CD8-positive, alpha-beta memory T cell (primary cell): ENCODE measurements at regions of chr2 and their contacts with region 1.

Region 1: GRCh38 chr2:233443468-233444183 is 89.3 kb downstream of the DGKD start:
- DNase-seq: peak; percentile 67 to 88 (median 73)
- H3K4me3 ChIP-seq: no peak overlapping the region
- H3K4me3 Mint-ChIP-seq: no peak overlapping the region
- H3K27ac ChIP-seq: no peak overlapping the region
- H3K27ac Mint-ChIP-seq: peak overlapping the region in 7 of 8 donors; percentile 15 to 84 (median 66)
- H3K4me1 ChIP-seq: peaks cover 13% of the 10 kb centered on the region
- H3K4me1 Mint-ChIP-seq: peaks cover 11 to 29% (median 17%) of the 10 kb centered on the region in 3 donors
- H3K27me3 ChIP-seq: no peaks in the 10 kb centered on the region
- H3K27me3 Mint-ChIP-seq: no peaks in the 10 kb centered on the region

Region 2: DNA sequence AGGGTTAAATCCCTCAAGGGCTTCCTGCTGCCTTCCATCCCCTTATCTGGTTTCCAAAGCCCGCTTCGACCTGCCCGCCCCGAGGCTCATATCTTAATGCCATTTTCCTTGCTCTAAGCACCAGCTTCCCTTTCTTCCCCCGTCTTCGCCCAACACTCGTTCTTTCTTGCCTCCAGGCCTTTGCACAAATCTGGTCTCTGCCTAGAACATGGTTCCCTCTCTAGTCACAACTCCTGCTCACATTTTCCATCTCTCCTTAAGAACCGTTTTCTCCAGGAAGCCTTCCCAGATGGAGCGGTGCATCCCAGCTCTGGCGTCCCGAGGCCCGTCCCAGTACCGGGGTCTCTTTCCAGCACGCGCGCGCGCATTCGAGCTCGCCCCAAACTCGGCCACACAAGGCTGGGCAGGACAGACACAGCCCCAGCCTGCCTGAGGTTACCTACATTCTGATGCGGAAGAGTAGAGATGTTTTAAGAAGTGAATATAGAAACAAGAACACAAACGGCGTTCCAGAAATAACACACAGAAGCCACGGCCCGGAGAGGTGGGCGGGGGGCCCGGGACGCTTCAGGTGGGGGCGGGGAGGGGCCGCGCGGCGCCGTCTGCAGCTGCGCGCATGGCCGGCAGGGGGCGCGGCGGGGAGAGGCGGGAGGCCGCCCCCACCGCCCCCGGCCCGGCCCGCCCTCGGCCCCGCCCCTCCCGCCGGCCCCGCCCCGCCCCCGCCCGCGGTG is 89.7 kb before region 1 on chr2 and contains the start of gene DGKD:
- CTCF ChIA-PET with region 1: interaction called, 23 read pairs
- POLR2A ChIA-PET with region 1: no interaction called
- DNase-seq: peak; percentile 61 to 77 (median 70)
- H3K4me3 ChIP-seq: peak within 1 kb of the TSS; percentile 75
- H3K4me3 Mint-ChIP-seq: peak within 1 kb of the TSS; percentile 92 to 96 (median 94)
- H3K27ac ChIP-seq: no peak within 1 kb of the TSS
- H3K27ac Mint-ChIP-seq: peak within 1 kb of the TSS; percentile 78 to 99 (median 91)
- H3K4me1 ChIP-seq: peaks cover 47% of the 10 kb centered on the region
- H3K4me1 Mint-ChIP-seq: peaks cover 57 to 72% (median 60%) of the 10 kb centered on the region in 3 donors
- H3K27me3 ChIP-seq: no peaks in the 10 kb centered on the region
- H3K27me3 Mint-ChIP-seq: peaks cover 0 to 3% of the 10 kb centered on the region in 2 donors
- total RNA-seq, gene DGKD: 54.2 to 61.9 TPM

Region 3: GRCh38 chr2:233404222-233404621 is 39.4 kb before region 1 on chr2:
- CTCF ChIA-PET with region 1: interaction called, 239 read pairs
- POLR2A ChIA-PET with region 1: interaction called, 8 read pairs
- DNase-seq: peak; percentile 41 to 80 (median 54)
- H3K4me3 ChIP-seq: no peak overlapping the region
- H3K4me3 Mint-ChIP-seq: no peak overlapping the region
- H3K27ac ChIP-seq: no peak overlapping the region
- H3K27ac Mint-ChIP-seq: peak overlapping the region in 7 of 8 donors; percentile 6 to 81 (median 73)
- H3K4me1 ChIP-seq: peaks cover 55% of the 10 kb centered on the region
- H3K4me1 Mint-ChIP-seq: peaks cover 54 to 77% (median 57%) of the 10 kb centered on the region in 3 donors
- H3K27me3 ChIP-seq: no peaks in the 10 kb centered on the region
- H3K27me3 Mint-ChIP-seq: no peaks in the 10 kb centered on the region

Region 4: GRCh38 chr2:233413559-233414272 is 29.9 kb before region 1 on chr2:
- CTCF ChIA-PET with region 1: interaction called, 239 read pairs
- POLR2A ChIA-PET with region 1: interaction called, 3 read pairs
- DNase-seq: peak; percentile 21 to 72 (median 42)
- H3K4me3 ChIP-seq: no peak overlapping the region
- H3K4me3 Mint-ChIP-seq: peak overlapping the region in 4 of 7 donors; percentile 9 to 56 (median 44)
- H3K27ac ChIP-seq: no peak overlapping the region
- H3K27ac Mint-ChIP-seq: peak overlapping the region in 7 of 8 donors; percentile 56 to 84 (median 73)
- H3K4me1 ChIP-seq: peaks cover 95% of the 10 kb centered on the region
- H3K4me1 Mint-ChIP-seq: peaks cover 81 to 98% (median 88%) of the 10 kb centered on the region in 3 donors
- H3K27me3 ChIP-seq: no peaks in the 10 kb centered on the region
- H3K27me3 Mint-ChIP-seq: peaks cover 0 to 1% of the 10 kb centered on the region in 2 donors

Region 5: DNA sequence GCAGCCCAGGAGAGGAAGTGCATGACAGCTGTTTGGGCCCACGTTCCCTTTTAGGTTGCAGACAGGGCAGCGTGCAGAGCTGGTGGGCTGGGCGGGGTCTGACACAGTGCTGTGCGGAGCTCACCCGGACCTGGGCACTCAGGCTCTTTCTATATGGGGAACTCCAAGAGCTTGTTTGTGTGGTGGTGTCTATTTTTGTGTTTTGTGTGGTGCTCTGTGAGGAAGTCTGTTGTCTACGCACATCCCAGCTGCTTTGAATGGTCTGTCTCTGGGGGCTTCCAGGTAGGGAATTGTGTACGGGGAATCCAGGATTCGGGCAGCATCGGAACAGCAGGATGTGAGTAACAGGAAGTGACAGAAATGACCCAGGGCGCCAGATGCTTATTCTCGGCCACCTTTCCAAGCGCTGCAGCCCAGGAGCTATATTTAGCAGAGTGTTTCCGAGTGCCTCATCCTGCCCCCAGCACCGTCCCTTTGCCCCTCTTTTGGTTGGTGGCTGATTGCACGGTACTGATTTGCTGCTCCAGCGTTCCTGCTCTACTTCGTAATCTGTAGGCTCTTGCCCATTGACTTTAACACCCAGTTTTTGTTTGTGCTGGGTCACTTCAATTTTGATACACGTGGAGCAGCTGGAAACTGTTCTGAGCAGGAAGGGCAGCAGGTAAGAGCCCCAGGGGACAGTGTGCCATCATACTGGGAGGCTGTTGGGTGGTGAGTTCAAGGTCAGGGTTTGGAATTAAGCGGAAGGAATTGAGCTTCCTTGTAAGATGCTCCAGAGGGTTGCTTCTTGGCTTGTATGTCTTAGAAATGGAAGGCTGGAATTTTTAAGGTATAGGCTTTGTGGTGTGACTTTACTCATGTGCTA is 24.6 kb before region 1 on chr2:
- CTCF ChIA-PET with region 1: interaction called, 71 read pairs
- POLR2A ChIA-PET with region 1: interaction called, 4 read pairs
- DNase-seq: peak; percentile 13 to 74 (median 44)
- H3K4me3 ChIP-seq: peak overlapping the region; percentile 73
- H3K4me3 Mint-ChIP-seq: peak overlapping the region; percentile 87 to 93 (median 88)
- H3K27ac ChIP-seq: no peak overlapping the region
- H3K27ac Mint-ChIP-seq: peak overlapping the region; percentile 67 to 98 (median 93)
- H3K4me1 ChIP-seq: peaks cover 97% of the 10 kb centered on the region
- H3K4me1 Mint-ChIP-seq: peaks cover 87 to 100% (median 96%) of the 10 kb centered on the region in 3 donors
- H3K27me3 ChIP-seq: no peaks in the 10 kb centered on the region
- H3K27me3 Mint-ChIP-seq: no peaks in the 10 kb centered on the region

Region 6: DNA sequence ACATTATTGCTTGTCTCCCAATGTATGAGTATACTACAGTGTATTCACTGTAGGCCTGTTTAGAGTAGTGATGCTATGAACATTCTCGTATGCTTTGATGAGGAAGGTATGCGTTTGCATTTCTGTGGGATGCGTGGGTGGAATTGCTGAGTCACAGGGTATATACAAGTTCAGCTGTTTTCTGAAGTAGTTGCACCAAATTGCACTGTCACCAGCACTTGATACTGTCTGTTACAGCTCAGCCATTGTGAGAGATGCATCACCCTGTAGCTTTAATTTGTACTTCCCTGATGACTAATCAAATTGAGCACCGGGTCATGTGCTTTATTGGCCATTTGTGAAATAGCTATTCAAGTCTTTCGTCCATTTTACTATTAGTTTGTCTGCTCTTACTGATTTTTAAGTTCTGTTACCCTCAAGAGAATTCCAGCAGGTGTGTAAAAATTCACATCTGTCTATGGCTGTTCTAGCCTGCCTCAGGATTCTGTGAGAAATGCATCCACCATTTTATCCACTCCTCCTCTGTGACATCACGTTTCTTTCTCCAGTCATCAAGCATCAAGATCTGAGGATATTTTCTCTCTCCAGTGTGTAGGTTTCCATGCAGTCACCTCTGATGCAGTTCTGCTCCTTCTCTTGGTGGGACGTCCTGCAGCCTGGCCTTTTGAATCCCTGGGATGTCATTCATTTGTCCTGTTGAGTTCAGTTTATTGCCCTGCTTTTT is 16.8 kb before region 1 on chr2:
- CTCF ChIA-PET with region 1: interaction called, 71 read pairs
- POLR2A ChIA-PET with region 1: interaction called, 4 read pairs
- DNase-seq: no peak
- H3K4me3 ChIP-seq: no peak overlapping the region
- H3K4me3 Mint-ChIP-seq: peak overlapping the region in 1 of 7 donors; percentile 42
- H3K27ac ChIP-seq: peak overlapping the region; percentile 3
- H3K27ac Mint-ChIP-seq: peak overlapping the region in 7 of 8 donors; percentile 4 to 63 (median 52)
- H3K4me1 ChIP-seq: peaks cover 70% of the 10 kb centered on the region
- H3K4me1 Mint-ChIP-seq: peaks cover 58 to 91% (median 90%) of the 10 kb centered on the region in 3 donors
- H3K27me3 ChIP-seq: no peaks in the 10 kb centered on the region
- H3K27me3 Mint-ChIP-seq: no peaks in the 10 kb centered on the region